Heart right ventricle (tissue), 16 donors: ENCODE measurements at regions of chr11 and their contacts with region 1.

Region 1: DNA sequence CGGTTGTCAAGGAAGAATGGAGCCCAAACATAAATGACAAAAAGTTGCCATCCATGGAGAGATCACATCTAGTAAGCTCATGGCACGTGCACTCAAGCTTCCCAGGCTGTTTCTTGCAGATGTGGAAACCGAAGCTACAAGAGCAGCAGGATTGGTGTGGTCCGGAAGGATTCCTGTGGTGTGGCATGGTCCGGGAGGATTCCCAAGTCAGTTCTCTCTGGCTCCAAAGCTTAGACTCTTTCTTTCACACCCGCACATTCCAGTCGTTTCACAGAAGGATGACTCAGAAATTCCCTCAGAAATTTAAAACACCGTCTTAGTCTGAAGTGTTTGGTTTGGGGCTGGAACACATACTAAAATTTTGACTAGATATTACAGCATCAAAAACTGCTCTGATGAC is 78.0 kb upstream of the DRD2 start:
- DNase-seq: no peak
- ATAC-seq: peak in 3 of 8 donors; percentile 29 to 61 (median 31)
- H3K4me3 ChIP-seq: no peak overlapping the region
- H3K27ac ChIP-seq: no peak overlapping the region
- H3K4me1 ChIP-seq: peaks cover 0 to 5% (median 0%) of the 10 kb centered on the region in 9 donors
- H3K27me3 ChIP-seq: peaks cover 0 to 11% (median 0%) of the 10 kb centered on the region in 7 donors
- CTCF ChIP-seq: no peak

Region 2: DNA sequence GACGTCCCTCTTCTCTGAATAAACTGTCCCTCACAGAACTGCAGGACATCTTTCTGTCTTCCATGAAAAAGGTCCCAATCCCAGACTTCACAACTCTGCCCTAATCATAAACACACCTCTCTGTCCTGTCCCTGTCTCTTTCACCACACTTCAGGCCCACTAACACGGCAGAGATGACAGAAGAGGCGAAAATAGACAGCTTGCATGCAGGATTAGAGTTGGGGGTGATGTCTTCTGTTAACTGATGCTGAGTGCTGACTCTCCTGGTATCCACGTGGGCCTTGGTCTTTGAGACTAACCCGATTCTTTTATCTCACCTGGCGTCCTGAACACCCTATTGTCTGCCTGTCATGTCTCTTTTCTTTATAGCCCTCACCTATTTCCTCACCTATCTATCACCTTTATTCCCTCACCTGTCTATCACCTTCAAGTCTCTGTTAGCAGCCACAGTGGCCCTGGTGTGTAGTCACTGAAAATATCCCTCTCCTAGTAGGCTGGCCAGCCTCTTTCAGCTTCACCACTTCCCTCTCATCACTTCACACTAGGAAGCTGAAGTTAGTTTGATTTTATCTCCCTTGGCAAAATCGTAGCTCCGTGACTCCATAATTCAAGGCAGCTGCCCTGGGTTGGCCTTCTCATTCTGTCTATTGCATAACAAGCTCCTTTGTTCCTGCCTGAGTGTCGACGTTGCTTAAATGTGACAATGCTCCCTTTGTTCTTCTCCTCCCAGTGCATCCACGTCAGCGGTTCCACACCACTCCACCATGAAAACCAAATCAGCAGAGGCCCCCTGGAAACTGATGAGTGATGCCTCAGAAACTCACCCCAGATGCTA is 47.5 kb before region 1 on chr11:
- intact Hi-C with region 1: no loop called
- DNase-seq: no peak
- ATAC-seq: peak in 2 of 8 donors; percentile 29 to 82
- H3K4me3 ChIP-seq: no peak overlapping the region
- H3K27ac ChIP-seq: no peak overlapping the region
- H3K4me1 ChIP-seq: peaks cover 0 to 5% (median 0%) of the 10 kb centered on the region in 9 donors
- H3K27me3 ChIP-seq: peaks cover 0 to 33% (median 3%) of the 10 kb centered on the region in 7 donors
- CTCF ChIP-seq: no peak

Region 3: DNA sequence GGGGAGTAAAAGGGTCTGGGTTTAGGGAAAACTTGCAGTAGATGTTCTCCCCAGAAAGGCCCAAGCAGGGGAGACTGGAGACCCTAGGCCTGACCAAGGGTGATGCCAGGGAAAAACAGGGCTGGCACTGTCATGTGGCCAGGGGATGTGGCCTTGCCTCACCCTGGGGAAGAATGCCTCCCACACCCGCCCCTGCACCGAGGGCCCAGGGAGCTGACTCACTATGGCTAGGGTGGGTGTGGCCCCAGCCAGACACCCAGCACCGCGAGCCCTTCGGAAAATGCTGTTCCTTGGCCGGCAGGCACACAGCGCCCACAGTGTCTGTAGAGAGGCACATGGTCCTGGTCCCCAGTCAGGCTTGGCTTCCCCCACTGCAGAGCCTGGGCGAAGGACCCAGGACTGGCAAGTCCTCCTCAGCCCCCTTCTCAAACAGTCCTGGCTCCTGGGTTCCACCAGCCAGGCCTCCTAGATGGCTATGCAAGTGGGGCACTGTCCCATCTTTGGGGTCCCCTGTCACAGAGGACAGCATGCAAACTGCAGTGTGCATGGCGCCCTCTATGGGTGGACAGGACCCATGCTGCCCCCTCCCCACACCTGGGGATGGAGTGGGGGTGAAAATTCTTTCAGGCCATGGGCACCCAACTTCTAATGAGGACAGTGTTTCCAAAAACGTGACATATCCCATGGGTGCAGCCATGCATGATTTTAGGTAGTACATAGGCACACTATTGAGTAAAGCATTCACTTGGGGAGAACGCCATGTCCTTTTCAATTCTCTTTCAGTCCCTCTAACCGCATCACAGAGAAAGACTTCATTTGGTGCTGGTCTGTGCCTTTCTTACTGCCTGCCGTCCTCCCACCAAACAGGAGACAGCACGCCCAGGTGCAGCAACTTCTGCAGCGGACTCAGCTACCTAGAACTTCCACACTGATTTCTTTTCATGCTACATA is 137.7 kb after region 1 on chr11:
- intact Hi-C with region 1: loop called in 1 of 10 experiments (anchors 10 kb)
- DNase-seq: no peak
- ATAC-seq: peak in 6 of 8 donors; percentile 46 to 87 (median 64)
- H3K4me3 ChIP-seq: no peak overlapping the region
- H3K27ac ChIP-seq: no peak overlapping the region
- H3K4me1 ChIP-seq: no peaks in the 10 kb centered on the region
- H3K27me3 ChIP-seq: no peaks in the 10 kb centered on the region
- CTCF ChIP-seq: peak in 7 of 9 donors; percentile 29 to 52 (median 42)

Region 4: DNA sequence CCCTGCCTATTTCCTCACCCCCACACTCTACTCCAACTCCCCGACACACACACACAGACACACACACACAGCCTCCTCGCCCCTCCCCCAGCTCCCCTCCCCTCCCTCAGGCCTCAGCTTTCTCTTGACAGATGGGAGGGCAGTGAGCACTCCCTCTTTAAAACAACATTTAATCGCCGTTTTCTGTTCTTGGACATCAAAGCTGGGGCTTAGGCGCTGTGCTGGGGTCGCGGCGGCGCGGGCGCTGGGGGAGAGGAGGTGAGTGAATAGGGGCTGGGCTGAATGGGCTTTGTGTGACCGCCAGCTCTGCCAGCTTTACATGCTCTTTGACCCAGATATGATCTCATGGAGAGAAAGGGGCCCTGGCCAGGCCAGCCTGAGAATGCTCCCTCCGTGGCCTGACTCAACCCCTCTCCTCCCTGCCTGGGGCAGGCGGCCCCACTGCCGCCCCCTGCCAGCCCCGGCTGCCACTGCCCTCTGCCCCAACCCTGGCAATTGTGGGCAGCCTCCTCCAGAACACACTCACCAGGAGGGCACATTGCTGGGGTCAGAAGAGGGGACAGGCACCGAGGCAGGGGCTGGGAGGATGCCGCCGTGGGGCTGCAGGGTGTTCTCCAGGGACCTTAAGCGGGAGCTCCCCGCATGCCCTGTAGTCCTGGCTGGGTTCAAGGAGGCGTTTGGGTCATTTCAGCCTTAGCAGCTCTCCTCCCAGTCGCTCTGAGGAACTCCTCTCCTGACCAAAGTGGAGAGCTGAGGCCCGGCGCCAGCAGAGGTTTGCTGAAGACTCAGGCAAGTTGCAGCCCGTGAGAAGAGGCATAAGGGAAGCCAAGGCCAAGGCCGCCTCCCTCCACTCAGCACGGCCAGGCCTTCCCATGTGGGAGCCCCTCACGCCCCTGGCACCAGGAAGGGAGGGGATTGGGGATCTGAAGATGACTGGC is 704.7 kb after region 1 on chr11:
- intact Hi-C with region 1: no loop called
- DNase-seq: peak; percentile 53 to 68
- ATAC-seq: peak; percentile 49 to 76 (median 62)
- H3K4me3 ChIP-seq: peak overlapping the region in 7 of 10 donors; percentile 6 to 36 (median 25)
- H3K27ac ChIP-seq: peak overlapping the region; percentile 28 to 87 (median 73)
- H3K4me1 ChIP-seq: peaks cover 20 to 60% (median 56%) of the 10 kb centered on the region in 9 donors
- H3K27me3 ChIP-seq: no peaks in the 10 kb centered on the region
- CTCF ChIP-seq: peak in 7 of 9 donors; percentile 13 to 57 (median 45)